ENCODE measurements at regions of chr3 and their contacts with region 1.

Region 1: GRCh38 chr3:183868796-183869195 is 15.9 kb downstream of the PARL start:
- DNase-seq: no peak
- H3K4me3 ChIP-seq: no peak overlapping the region
- H3K27ac ChIP-seq: no peak overlapping the region
- H3K4me1 ChIP-seq: no peaks in the 10 kb centered on the region
- H3K27me3 ChIP-seq: no peaks in the 10 kb centered on the region
- CTCF ChIP-seq: no peak

Region 2: GRCh38 chr3:183775781-183776180 is 93.0 kb before region 1 on chr3:
- CTCF ChIA-PET with region 1: no interaction called
- POLR2A ChIA-PET with region 1: no interaction called
- intact Hi-C with region 1: no loop called
- DNase-seq: no peak
- H3K4me3 ChIP-seq: no peak overlapping the region
- H3K27ac ChIP-seq: peak overlapping the region; percentile 5; the same call in 1 of the 2 replicates
- H3K4me1 ChIP-seq: no peaks in the 10 kb centered on the region
- H3K27me3 ChIP-seq: no peaks in the 10 kb centered on the region
- CTCF ChIP-seq: no peak

Region 3: DNA sequence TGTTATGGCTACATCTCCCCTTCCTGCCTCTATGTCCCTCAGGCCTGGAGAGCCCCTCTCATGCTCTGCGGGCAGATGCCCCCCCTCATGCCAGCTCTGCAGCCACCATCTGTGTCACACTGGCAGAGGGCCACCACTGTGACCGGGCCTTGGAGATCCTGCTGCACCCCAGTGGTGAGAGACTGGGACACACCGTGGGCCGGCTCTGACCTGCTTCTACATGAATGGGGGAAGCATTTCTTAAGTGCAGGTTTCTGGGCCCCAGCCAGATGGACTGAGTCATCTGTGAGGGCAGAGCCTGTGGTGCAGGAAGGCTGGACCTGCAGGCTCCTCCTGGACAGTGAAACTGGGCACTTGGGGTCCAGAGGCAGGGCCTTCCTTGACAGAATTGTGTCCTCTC is 365.4 kb after region 1 on chr3:
- CTCF ChIA-PET with region 1: interaction called, 16 read pairs
- POLR2A ChIA-PET with region 1: no interaction called
- intact Hi-C with region 1: no loop called
- DNase-seq: peak; percentile 92 to 95
- H3K4me3 ChIP-seq: no peak overlapping the region
- H3K27ac ChIP-seq: no peak overlapping the region
- H3K4me1 ChIP-seq: peaks cover 17% of the 10 kb centered on the region
- H3K27me3 ChIP-seq: peaks cover 36% of the 10 kb centered on the region
- CTCF ChIP-seq: peak; percentile 60

Measured in PC-9 (cell line).